Tibial artery (tissue), 4 donors: ENCODE measurements at regions of chr7 and their contacts with region 1.

Region 1: GRCh38 chr7:117119192-117119924 is 166.1 kb downstream of the ST7 start:
- DNase-seq: peak; percentile 86 to 88
- H3K4me3 ChIP-seq: no peak overlapping the region
- H3K27ac ChIP-seq: no peak overlapping the region
- H3K4me1 ChIP-seq: peaks cover 0 to 36% (median 5%) of the 10 kb centered on the region in 4 donors
- H3K27me3 ChIP-seq: no peaks in the 10 kb centered on the region
- CTCF ChIP-seq: peak; percentile 80 to 90

Region 2: DNA sequence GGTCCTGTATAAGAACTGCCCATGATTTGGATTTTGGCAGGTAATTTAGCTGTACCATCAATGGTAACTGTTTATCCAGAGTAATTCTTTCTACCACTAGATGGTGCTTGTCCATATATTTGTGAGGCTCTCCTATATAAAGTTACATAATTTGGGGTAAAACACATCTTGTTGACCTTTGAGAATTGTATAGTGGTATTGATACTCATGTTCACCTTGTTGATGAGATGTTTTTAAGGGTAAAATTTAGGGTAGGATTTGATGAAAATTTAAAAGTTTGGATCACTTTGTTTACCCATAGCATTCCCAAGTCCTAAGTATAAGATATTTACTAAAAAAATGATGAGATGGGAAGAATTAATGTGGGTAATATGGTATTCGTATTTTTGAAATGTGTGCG is 134.4 kb before region 1 on chr7:
- intact Hi-C with region 1: loop called (anchors 2 kb)
- DNase-seq: no peak
- H3K4me3 ChIP-seq: no peak overlapping the region
- H3K27ac ChIP-seq: no peak overlapping the region
- H3K4me1 ChIP-seq: peaks cover 0 to 3% (median 0%) of the 10 kb centered on the region in 4 donors
- H3K27me3 ChIP-seq: no peaks in the 10 kb centered on the region
- CTCF ChIP-seq: peak; percentile 60 to 69

Region 3: DNA sequence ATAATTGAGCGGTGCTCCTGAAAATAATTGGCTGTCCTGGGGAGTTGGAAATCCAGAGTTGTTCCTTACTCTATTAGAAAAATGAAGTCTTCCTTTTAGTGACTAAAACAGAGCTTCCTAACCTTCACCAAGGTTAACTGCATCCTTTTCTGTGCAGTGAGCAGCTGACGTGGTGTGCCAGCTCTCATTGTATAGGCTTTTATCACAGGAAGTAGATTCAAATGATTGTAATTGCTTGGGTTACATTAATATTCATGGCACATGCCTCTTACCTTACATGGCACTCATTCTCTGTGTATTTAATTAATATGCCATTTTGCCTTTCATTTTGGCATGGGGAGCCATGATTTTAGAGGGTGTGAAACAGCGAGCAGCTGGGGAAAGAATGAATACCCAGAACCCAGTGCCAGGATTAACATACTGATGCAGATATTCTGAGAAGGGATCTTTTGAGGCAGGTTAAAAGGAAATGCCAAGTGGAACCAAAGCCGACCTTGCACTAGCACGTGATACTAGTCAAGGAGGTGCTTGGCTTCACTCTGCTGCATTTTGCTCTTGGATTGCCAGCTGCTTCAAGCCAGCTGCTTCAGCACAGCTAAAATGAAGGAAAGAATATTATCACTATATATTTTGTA is 50.7 kb before region 1 on chr7:
- intact Hi-C with region 1: no loop called
- DNase-seq: no peak
- H3K4me3 ChIP-seq: peak overlapping the region in 1 of 2 donors; percentile 12
- H3K27ac ChIP-seq: peak overlapping the region; percentile 45 to 53
- H3K4me1 ChIP-seq: peaks cover 0 to 80% (median 38%) of the 10 kb centered on the region in 4 donors
- H3K27me3 ChIP-seq: no peaks in the 10 kb centered on the region
- CTCF ChIP-seq: no peak

Region 4: DNA sequence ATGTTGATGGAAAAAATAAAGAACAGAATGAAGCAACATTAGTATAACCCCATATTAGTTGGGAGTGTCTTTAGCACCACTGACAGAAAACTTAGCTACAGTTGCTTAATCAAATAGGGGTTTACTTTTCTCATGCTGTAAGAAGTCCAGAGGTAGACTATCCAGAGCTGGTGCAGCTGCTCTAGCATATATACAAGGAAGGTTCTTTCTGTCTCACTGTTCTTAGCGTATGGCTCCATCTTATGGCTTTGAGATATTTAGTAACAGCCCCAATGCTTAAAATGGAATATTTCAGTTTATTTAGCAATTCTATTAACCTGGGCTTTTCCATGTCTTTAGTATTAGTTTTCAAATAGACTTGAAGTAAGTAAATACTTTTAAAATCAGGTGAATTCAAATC is 218.7 kb after region 1 on chr7:
- intact Hi-C with region 1: no loop called
- DNase-seq: no peak
- H3K4me3 ChIP-seq: no peak overlapping the region
- H3K27ac ChIP-seq: no peak overlapping the region
- H3K4me1 ChIP-seq: no peaks in the 10 kb centered on the region
- H3K27me3 ChIP-seq: no peaks in the 10 kb centered on the region
- CTCF ChIP-seq: no peak